Right ventricle myocardium inferior (tissue), 1 donor: ENCODE measurements at regions of chr10 and their contacts with region 1.

Region 1: DNA sequence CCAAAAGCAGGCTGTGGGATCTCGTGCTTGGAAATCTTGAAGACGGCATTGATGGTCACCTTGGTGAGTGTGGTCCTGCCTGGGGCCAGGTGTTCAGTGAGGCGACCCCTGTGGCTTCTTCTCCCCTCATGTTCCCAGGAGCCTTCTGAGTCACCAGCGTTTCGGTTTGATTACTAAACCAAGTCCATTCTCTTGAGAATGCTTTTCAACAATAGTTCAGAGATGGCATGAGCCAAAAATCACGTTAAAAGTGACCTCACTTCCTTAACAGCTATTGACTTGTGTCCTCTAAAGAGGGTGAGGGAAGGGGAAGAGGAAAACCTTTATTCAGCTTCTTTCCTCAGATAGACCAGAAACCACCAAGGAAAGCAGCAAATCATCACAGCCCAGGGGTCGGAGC is 315.2 kb downstream of the GATA3 start:
- DNase-seq: no peak
- ATAC-seq: no peak

Region 2: GRCh38 chr10:7285522-7286322 is 1083.9 kb before region 1 on chr10:
- intact Hi-C with region 1: no loop called
- DNase-seq: no peak
- ATAC-seq: no peak

Region 3: GRCh38 chr10:8279598-8279997 is 90.1 kb before region 1 on chr10:
- intact Hi-C with region 1: loop called (anchors 10 kb)
- DNase-seq: no peak
- ATAC-seq: no peak

Region 4: GRCh38 chr10:8596929-8597472 is 227.3 kb after region 1 on chr10:
- intact Hi-C with region 1: no loop called
- DNase-seq: no peak
- ATAC-seq: no peak